ENCODE measurements at regions of chr5 and their contacts with region 1.

Region 1: DNA sequence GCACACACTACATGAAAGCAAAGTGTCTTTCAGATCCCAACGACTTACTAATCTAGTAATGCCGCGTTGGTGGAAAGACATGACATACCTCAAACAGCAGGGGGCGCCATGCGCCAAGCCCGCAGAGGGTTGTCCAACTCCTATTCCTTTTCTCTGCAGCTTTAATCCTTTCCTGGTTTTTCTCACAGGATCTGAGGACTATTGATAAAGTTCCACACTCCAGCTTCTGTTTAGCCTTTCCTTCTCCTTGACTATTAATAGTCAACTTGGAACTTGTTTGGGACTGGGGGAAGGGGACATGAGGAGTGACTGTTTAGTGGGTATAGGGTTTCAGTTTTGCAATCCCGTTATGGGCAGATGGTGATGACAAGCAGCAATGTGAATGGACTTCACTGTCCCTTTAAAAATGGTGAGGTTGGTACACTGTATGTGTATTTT is 62.9 kb downstream of the OTULIN start:
- DNase-seq: no peak
- H3K4me3 ChIP-seq: no peak overlapping the region
- CTCF ChIP-seq: peak; percentile 81

Region 2: GRCh38 chr5:13771011-13771571 is 956.4 kb before region 1 on chr5:
- CTCF ChIA-PET with region 1: no interaction called
- POLR2A ChIA-PET with region 1: no interaction called
- DNase-seq: no peak
- H3K4me3 ChIP-seq: no peak overlapping the region
- CTCF ChIP-seq: no peak

Region 3: GRCh38 chr5:14240359-14240758 is 487.1 kb before region 1 on chr5:
- CTCF ChIA-PET with region 1: no interaction called
- POLR2A ChIA-PET with region 1: no interaction called
- DNase-seq: no peak
- H3K4me3 ChIP-seq: no peak overlapping the region
- CTCF ChIP-seq: no peak

Region 4: DNA sequence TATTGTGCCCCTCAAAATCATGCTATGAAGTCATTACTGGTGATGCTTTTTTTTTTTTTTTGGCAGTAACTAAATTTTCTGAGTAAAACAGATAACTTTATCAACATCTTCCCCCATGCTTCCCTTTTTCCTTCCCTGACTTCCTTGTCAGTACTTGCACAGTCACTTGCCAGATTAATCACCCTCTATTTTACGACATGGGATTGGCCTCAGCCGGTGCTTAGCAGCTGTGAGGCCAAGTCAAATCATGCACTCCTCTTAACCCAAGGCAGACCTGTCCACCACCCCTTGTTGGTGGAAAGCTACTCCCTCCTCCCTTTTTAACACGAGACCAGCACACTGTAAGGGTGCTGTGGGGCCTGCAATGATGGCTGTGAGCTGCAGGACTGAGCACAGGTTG is 263.8 kb before region 1 on chr5:
- CTCF ChIA-PET with region 1: no interaction called
- POLR2A ChIA-PET with region 1: no interaction called
- DNase-seq: no peak
- H3K4me3 ChIP-seq: no peak overlapping the region
- CTCF ChIP-seq: no peak

Region 5: GRCh38 chr5:14685757-14686156 is 41.7 kb before region 1 on chr5:
- CTCF ChIA-PET with region 1: interaction called, 39 read pairs
- POLR2A ChIA-PET with region 1: no interaction called
- DNase-seq: no peak
- H3K4me3 ChIP-seq: no peak overlapping the region
- CTCF ChIP-seq: peak; percentile 63

Region 6: GRCh38 chr5:14706615-14707021 is 20.8 kb before region 1 on chr5:
- CTCF ChIA-PET with region 1: interaction called, 58 read pairs
- POLR2A ChIA-PET with region 1: no interaction called
- DNase-seq: peak; percentile 41
- H3K4me3 ChIP-seq: no peak overlapping the region
- CTCF ChIP-seq: no peak

Region 7: GRCh38 chr5:14739538-14739937 is 12.1 kb after region 1 on chr5:
- CTCF ChIA-PET with region 1: interaction called, 28 read pairs
- POLR2A ChIA-PET with region 1: no interaction called
- DNase-seq: no peak
- H3K4me3 ChIP-seq: no peak overlapping the region
- CTCF ChIP-seq: no peak

Region 8: DNA sequence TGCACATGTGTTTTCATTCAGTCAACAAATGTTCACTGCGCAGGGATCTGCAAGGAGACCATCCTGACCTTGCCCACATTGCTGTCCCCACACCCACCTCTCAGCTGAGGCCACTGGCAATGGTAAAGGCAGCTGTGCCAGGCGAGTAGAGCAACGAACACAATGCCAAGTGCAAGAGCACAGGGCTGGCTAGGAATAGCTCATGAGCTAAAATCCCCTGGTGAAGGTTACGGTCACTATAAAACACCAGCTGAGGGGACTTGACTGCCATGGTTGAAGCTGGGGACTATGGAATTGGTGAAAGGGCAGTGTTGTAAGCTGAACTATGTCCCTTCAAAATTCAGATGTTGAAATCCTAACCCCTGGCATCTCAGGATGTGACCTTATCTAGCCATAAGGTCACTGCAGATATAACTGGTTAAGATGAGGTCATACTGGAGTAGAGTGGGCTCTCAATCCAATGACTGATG is 33.1 kb after region 1 on chr5:
- CTCF ChIA-PET with region 1: interaction called, 29 read pairs
- POLR2A ChIA-PET with region 1: no interaction called
- DNase-seq: no peak
- H3K4me3 ChIP-seq: no peak overlapping the region
- CTCF ChIP-seq: no peak

Region 9: GRCh38 chr5:14968796-14969195 is 241.3 kb after region 1 on chr5:
- CTCF ChIA-PET with region 1: interaction called, 10 read pairs
- POLR2A ChIA-PET with region 1: no interaction called
- DNase-seq: no peak
- H3K4me3 ChIP-seq: no peak overlapping the region
- CTCF ChIP-seq: no peak

Region 10: GRCh38 chr5:15013654-15014463 is 286.4 kb after region 1 on chr5:
- CTCF ChIA-PET with region 1: interaction called, 332 read pairs
- POLR2A ChIA-PET with region 1: no interaction called
- DNase-seq: no peak
- H3K4me3 ChIP-seq: no peak overlapping the region
- CTCF ChIP-seq: peak; percentile 32

Measured in AG04449 (cell line).